ENCODE measurements at regions of chr7 and their contacts with region 1.

Region 1: GRCh38 chr7:25259587-25260243 is 31.4 kb upstream of the NPVF start:
- H3K4me3 ChIP-seq: no peak overlapping the region
- H3K27ac ChIP-seq: no peak overlapping the region
- H3K4me1 ChIP-seq: peaks cover 11% of the 10 kb centered on the region; the same call in 1 of the 2 replicates
- CTCF ChIP-seq: peak; percentile 73

Region 2: DNA sequence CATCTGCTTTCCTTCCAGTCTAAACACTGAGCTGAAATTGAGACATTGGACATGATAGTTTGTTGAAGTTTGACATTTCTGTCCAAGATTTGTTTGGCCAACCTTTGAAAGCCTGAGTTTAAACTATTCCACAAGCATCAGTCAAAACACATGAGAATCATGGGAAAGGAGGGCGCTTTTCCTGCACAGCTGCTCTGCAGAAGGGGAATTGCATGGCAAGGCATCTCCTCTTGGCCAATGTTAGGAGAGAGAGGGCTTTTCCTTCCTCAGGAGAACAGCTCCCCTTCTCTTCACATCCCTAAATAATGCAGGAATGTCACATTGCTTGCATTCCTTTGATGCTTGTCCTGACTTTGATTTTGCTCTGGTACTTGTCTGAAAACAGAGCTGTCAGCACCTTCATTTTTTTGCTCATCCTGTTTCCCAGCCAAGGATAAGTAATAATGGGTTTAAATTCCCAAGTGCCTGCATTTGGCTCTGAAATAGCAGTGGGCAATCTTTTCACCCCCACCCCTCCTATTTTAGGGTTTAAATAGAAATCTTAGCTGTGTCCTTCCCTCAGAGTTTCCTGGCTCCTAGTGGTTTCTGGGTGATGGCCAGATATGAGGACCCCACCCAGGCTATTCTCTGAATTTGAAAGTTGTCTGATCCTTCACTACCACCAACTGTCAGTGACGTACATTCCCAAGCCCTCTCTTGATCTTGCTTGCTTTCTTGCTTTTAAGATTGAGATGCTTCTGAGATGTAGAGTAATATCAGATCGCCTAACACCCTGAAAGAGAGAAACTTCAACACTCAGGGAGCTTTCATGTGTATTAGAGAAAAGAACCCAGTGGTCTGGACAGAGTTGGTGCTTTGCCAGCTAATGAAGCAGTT is 43.8 kb after region 1 on chr7:
- CTCF ChIA-PET with region 1: interaction called, 23 read pairs
- POLR2A ChIA-PET with region 1: no interaction called
- H3K4me3 ChIP-seq: no peak overlapping the region
- H3K27ac ChIP-seq: no peak overlapping the region
- H3K4me1 ChIP-seq: no peaks in the 10 kb centered on the region
- CTCF ChIP-seq: no peak

Region 3: GRCh38 chr7:25381818-25382589 is 122.3 kb after region 1 on chr7:
- CTCF ChIA-PET with region 1: interaction called, 230 read pairs
- POLR2A ChIA-PET with region 1: no interaction called
- H3K4me3 ChIP-seq: no peak overlapping the region
- H3K27ac ChIP-seq: no peak overlapping the region
- H3K4me1 ChIP-seq: no peaks in the 10 kb centered on the region
- CTCF ChIP-seq: no peak

Region 4: GRCh38 chr7:25389489-25390106 is 129.9 kb after region 1 on chr7:
- CTCF ChIA-PET with region 1: interaction called, 230 read pairs
- POLR2A ChIA-PET with region 1: interaction called, 4 read pairs
- H3K4me3 ChIP-seq: no peak overlapping the region
- H3K27ac ChIP-seq: no peak overlapping the region
- H3K4me1 ChIP-seq: peaks cover 2% of the 10 kb centered on the region; the same call in 1 of the 2 replicates
- CTCF ChIP-seq: peak; percentile 28; the same call in 1 of the 2 replicates

Region 5: GRCh38 chr7:25395976-25396375 is 136.3 kb after region 1 on chr7:
- CTCF ChIA-PET with region 1: interaction called, 230 read pairs
- POLR2A ChIA-PET with region 1: no interaction called
- H3K4me3 ChIP-seq: no peak overlapping the region
- H3K27ac ChIP-seq: no peak overlapping the region
- H3K4me1 ChIP-seq: peaks cover 2% of the 10 kb centered on the region; the same call in 1 of the 2 replicates
- CTCF ChIP-seq: no peak